GM10248 (cell line): ENCODE measurements at regions of chr16 and their contacts with region 1.

Region 1: DNA sequence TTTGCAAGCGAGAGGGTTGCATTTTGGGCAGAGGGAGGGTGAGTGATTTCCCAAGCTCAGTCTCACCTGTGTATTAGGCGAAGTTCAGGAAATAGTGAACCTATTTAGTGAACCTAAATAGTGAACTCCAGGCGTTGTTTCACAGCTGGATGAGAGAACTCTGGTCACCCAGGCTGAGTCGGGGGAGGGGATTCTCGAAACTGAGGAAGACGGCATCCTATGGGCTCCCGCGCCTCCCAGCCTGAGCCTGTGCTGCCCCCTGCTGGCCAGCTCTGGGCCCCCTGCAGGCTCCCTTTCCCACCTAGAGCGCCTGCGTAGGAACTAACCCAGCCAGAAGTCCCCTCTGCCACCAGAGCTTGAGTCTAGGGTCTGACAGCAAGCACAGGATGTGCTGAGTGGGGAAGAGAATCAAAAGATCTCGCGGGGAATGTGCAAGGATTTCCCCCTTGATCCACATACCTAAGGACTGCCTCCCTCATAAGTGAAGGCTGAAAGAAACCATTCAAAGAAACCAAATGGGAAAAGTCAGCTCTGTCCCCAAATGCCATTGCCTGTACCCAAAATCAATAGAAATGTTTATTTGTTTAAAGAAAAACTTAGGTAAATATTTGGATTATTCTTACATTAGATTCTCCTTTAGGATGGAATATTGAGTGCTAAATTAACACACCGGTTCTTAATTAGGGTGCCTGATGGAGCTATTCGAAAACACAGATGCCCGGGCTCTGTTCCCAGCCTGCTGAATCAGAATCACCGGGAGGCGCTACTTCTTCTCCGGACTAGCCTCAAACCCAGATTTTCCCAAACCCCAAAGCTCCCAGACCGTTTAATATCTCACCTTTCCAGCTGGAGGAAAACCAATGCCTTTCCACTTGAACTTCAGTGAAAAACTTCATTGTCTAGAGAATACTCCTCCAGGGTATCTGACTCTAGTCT is 14.8 kb upstream of the MARVELD3 start:
- DNase-seq: peak; percentile 85
- CTCF ChIP-seq: peak; percentile 94

Region 2: GRCh38 chr16:71412270-71413160 is 198.7 kb before region 1 on chr16:
- CTCF ChIA-PET with region 1: interaction called, 69 read pairs
- POLR2A ChIA-PET with region 1: no interaction called
- DNase-seq: peak; percentile 82
- CTCF ChIP-seq: peak; percentile 89

Region 3: DNA sequence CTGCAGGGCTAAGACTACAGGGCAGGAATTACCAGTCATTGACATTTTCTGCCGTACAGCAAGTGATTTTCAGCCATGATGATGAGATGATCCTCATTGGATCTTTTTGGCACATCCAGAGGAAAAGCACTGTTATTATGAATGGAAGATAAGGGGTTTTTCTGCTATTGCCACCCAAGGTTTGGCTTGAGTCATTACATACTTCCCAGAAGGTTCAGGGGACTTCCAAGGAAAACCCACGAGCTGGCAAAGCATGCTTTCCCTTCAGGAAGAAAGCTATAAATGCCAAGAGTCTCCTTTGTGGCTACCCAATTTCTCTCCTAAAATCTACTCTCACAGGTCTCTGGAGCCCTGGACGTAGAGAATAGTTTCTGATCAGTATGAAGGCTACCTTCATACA is 78.8 kb before region 1 on chr16:
- CTCF ChIA-PET with region 1: interaction called, 20 read pairs
- POLR2A ChIA-PET with region 1: interaction called, 5 read pairs
- DNase-seq: no peak
- CTCF ChIP-seq: no peak

Region 4: DNA sequence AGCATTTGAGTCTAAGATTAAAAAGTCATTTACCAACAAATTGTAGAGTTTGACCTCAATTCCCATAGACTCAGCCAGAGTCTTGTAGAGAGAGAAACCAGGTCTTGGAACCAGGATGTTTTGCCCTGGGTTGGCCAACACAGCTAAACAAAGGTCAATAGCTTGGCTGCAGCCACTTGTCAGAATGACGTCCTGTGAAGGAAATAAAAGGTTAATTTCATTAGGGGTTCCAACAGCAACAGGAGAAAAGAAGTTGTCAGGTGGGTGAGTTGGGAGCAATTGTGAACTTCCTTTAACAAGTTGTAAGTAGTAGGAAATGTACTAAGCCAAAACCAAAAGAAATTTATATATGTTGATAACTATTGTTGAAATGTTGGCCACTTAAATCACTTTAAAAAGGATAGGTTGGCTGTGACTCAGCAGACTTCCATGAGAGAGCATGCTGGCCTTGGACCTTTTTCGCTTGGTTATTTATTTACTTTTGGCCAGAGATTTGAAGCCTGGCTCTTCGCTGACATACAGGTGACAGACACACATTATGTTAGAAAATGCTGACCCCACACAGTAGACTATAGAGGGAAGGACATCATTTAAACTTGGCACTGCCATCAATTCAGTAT is 38.6 kb before region 1 on chr16:
- CTCF ChIA-PET with region 1: interaction called, 111 read pairs
- POLR2A ChIA-PET with region 1: no interaction called
- DNase-seq: no peak
- CTCF ChIP-seq: no peak

Region 5: DNA sequence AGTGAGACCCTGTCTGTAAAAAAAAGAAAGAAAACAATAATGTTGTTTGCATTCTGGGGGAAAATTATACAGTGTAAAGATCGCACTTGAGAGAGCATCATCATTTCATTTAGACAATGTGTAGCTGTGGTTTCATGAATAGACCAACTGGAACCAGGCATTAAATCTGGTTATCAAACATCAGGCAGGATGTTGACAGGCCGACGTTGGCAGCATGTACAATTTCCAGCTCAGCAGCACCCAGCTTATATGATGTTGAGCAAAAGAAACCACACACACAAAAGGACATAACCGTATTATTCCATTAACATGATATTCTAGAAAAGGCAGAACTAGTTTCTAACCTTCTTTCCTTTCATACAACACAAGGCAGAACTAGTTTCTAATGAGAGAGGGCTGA is 20.6 kb after region 1 on chr16:
- CTCF ChIA-PET with region 1: interaction called, 13 read pairs
- POLR2A ChIA-PET with region 1: interaction called, 5 read pairs
- DNase-seq: no peak
- CTCF ChIP-seq: no peak

Region 6: GRCh38 chr16:71834241-71834640 is 223.0 kb after region 1 on chr16:
- CTCF ChIA-PET with region 1: no interaction called
- POLR2A ChIA-PET with region 1: no interaction called
- DNase-seq: no peak
- CTCF ChIP-seq: no peak

Region 7: GRCh38 chr16:71961066-71962039 is 350.1 kb after region 1 on chr16:
- CTCF ChIA-PET with region 1: interaction called, 16 read pairs
- POLR2A ChIA-PET with region 1: no interaction called
- DNase-seq: peak; percentile 73
- CTCF ChIP-seq: peak; percentile 86